Colonic mucosa (tissue), 4 donors: ENCODE measurements at regions of chr7 and their contacts with region 1.

Region 1: GRCh38 chr7:30564243-30564892 is 30.3 kb upstream of the GARS1 start:
- DNase-seq: peak; percentile 87
- H3K4me3 ChIP-seq: no peak overlapping the region
- H3K27ac ChIP-seq: no peak overlapping the region
- H3K4me1 ChIP-seq: no peaks in the 10 kb centered on the region
- H3K27me3 ChIP-seq: no peaks in the 10 kb centered on the region
- CTCF ChIP-seq: peak; percentile 64

Region 2: GRCh38 chr7:30164567-30164966 is 399.8 kb before region 1 on chr7:
- intact Hi-C with region 1: loop called (anchors 5 kb)
- DNase-seq: no peak
- H3K4me3 ChIP-seq: no peak overlapping the region
- H3K27ac ChIP-seq: no peak overlapping the region
- H3K4me1 ChIP-seq: no peaks in the 10 kb centered on the region
- H3K27me3 ChIP-seq: no peaks in the 10 kb centered on the region
- CTCF ChIP-seq: peak; percentile 49

Region 3: GRCh38 chr7:30276203-30276900 is 288.0 kb before region 1 on chr7:
- intact Hi-C with region 1: loop called (anchors 5 kb)
- DNase-seq: no peak
- H3K4me3 ChIP-seq: no peak overlapping the region
- H3K27ac ChIP-seq: no peak overlapping the region
- H3K4me1 ChIP-seq: peaks cover 4% of the 10 kb centered on the region
- H3K27me3 ChIP-seq: no peaks in the 10 kb centered on the region
- CTCF ChIP-seq: peak; percentile 52

Region 4: GRCh38 chr7:30510124-30511075 is 54.0 kb before region 1 on chr7:
- intact Hi-C with region 1: loop called (anchors 5 kb)
- DNase-seq: peak; percentile 44
- H3K4me3 ChIP-seq: no peak overlapping the region
- H3K27ac ChIP-seq: no peak overlapping the region
- H3K4me1 ChIP-seq: no peaks in the 10 kb centered on the region
- H3K27me3 ChIP-seq: no peaks in the 10 kb centered on the region
- CTCF ChIP-seq: peak; percentile 82

Region 5: DNA sequence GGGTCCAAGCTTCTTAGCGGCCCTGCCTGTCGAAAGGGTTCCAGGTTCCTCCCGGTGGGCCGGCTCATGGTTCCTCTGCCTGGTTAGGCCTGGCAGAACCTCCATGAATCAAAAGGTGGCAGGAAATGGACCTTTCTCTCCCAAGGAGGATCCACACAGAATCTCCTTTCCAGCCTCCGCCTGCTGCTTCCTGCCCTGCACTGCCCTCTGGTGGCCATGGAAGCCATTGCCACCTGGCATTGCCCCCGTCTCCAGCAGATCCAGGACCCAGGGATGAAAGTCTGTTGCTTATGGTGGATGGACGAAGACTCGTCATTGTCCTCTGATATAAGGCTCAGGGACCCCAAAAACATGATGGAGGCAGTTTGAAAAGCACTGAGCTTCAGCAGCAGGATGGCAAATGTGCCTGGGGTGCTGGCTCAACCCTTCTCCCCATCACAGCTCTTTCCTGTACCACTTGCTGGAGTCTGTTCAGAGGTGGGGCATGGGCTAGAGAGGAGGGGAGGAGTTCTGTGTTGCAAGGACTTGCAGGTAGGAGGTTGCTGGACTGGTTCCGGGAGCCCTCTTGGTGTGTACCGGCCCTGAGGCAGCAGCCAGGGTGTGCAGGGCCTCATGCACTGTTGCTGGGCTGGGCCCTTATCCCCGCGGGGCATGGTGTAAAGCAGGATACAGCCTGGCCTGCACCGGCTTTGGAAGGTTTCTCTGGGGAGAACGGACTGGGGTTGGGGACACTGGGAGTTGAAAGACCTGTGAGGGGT is 176.2 kb after region 1 on chr7:
- intact Hi-C with region 1: loop called (anchors 10 kb)
- DNase-seq: peak; percentile 79
- H3K4me3 ChIP-seq: no peak overlapping the region
- H3K27ac ChIP-seq: no peak overlapping the region
- H3K4me1 ChIP-seq: no peaks in the 10 kb centered on the region
- H3K27me3 ChIP-seq: no peaks in the 10 kb centered on the region
- CTCF ChIP-seq: peak; percentile 99

Region 6: GRCh38 chr7:30789334-30789711 is 225.0 kb after region 1 on chr7:
- intact Hi-C with region 1: no loop called
- DNase-seq: no peak
- H3K4me3 ChIP-seq: no peak overlapping the region
- H3K27ac ChIP-seq: no peak overlapping the region
- H3K4me1 ChIP-seq: no peaks in the 10 kb centered on the region
- H3K27me3 ChIP-seq: no peaks in the 10 kb centered on the region
- CTCF ChIP-seq: no peak